T-cell (primary cell): ENCODE measurements at regions of chr3 and their contacts with region 1.

Region 1: GRCh38 chr3:187798126-187798525 is 52.9 kb upstream of the BCL6 start:
- DNase-seq: no peak
- ATAC-seq: no peak
- H3K4me3 ChIP-seq: no peak overlapping the region
- H3K4me3 Mint-ChIP-seq: peak overlapping the region in 1 of 3 donors; percentile 75
- H3K27ac ChIP-seq: no peak overlapping the region
- H3K27ac Mint-ChIP-seq: peak overlapping the region in 1 of 2 donors; percentile 56
- H3K4me1 ChIP-seq: peaks cover 32 to 34% of the 10 kb centered on the region in 2 experiments
- H3K4me1 Mint-ChIP-seq: peaks cover 49 to 51% (median 51%) of the 10 kb centered on the region in 3 donors
- H3K27me3 ChIP-seq: no peaks in the 10 kb centered on the region
- H3K27me3 Mint-ChIP-seq: peaks cover 0 to 4% of the 10 kb centered on the region in 2 donors

Region 2: GRCh38 chr3:188209740-188210139 is 411.6 kb after region 1 on chr3:
- CTCF ChIA-PET with region 1: no interaction called
- POLR2A ChIA-PET with region 1: interaction called in 1 of 2 experiments, 11 read pairs
- DNase-seq: no peak
- ATAC-seq: no peak
- H3K4me3 ChIP-seq: no peak overlapping the region
- H3K4me3 Mint-ChIP-seq: no peak overlapping the region
- H3K27ac ChIP-seq: no peak overlapping the region
- H3K27ac Mint-ChIP-seq: no peak overlapping the region
- H3K4me1 ChIP-seq: no peaks in the 10 kb centered on the region
- H3K4me1 Mint-ChIP-seq: peaks cover 10 to 16% (median 11%) of the 10 kb centered on the region in 3 donors
- H3K27me3 ChIP-seq: no peaks in the 10 kb centered on the region
- H3K27me3 Mint-ChIP-seq: no peaks in the 10 kb centered on the region